ENCODE measurements at regions of chr2 and their contacts with region 1.

Region 1: DNA sequence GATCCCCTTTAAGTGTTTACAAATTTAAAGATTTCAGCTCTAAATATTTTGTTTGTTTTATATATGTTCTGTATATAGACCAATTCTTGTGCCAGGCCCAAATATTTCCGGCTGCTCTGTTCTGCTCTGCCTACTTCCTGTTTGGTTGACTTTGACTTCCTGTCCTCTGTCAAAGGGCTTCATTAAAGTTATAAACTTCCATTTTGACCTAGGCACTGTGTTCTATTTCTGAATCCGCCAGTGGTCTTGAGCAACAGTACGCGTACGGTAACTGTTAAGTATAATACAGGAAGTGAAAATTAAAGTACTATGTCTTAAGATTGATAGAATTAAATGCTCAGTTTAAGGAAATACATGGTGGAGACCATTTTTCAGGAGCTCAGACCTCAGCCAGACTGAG is 13.5 kb upstream of the REL start:
- DNase-seq: peak in 7 of 10 donors; percentile 17 to 63 (median 36)
- ATAC-seq: peak; percentile 93 to 98
- H3K4me3 Mint-ChIP-seq: peak overlapping the region in 9 of 10 donors; percentile 49 to 79 (median 64)
- H3K27ac Mint-ChIP-seq: peak overlapping the region; percentile 72 to 97 (median 88)
- H3K4me1 Mint-ChIP-seq: peaks cover 11 to 41% (median 18%) of the 10 kb centered on the region in 4 donors
- H3K27me3 Mint-ChIP-seq: no peaks in the 10 kb centered on the region

Region 2: GRCh38 chr2:60818272-60818671 is 49.6 kb before region 1 on chr2:
- POLR2A ChIA-PET with region 1: interaction called, 15 read pairs
- DNase-seq: peak in 3 of 10 donors; percentile 15 to 64 (median 16)
- ATAC-seq: no peak
- H3K4me3 Mint-ChIP-seq: peak overlapping the region in 2 of 10 donors; percentile 14 to 70
- H3K27ac Mint-ChIP-seq: peak overlapping the region in 7 of 10 donors; percentile 6 to 97 (median 90)
- H3K4me1 Mint-ChIP-seq: peaks cover 18 to 45% (median 40%) of the 10 kb centered on the region in 4 donors
- H3K27me3 Mint-ChIP-seq: peaks cover 0 to 12% (median 3%) of the 10 kb centered on the region in 5 donors

Region 3: DNA sequence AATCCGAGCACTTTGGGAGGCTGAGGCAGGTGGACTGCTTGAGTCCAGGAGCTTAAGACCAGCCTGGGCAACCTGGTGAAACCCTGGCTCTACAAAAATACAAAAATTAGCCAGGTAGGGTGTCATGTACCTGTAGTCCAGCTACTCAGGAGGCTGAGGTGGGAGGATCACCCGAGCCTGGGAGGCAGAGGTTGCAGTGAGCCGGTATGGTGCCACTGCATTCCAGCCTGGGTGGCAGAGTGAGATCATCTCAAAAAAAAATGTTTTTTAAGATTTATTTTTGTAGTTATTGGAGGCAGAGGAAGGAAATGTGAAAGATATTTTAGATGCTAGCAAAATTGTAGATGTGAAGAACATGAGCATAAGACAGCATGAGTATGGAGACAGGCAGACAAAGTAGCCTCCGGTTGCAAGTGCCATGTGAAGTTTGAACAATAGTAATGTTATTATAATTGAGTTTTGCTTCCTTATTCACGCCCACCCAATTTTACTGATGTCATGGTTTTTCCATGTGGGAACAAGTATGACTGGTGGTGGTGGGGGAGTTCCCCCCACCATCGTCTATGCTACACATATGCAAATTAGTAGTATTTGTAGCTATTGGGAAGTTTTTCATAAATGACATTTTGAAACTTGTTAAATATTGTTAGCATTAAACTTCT is 31.5 kb after region 1 on chr2:
- POLR2A ChIA-PET with region 1: no interaction called
- DNase-seq: no peak
- ATAC-seq: peak in 1 of 2 donors; percentile 12
- H3K4me3 Mint-ChIP-seq: peak overlapping the region in 1 of 10 donors; percentile 44
- H3K27ac Mint-ChIP-seq: peak overlapping the region in 7 of 10 donors; percentile 57 to 79 (median 70)
- H3K4me1 Mint-ChIP-seq: peaks cover 5 to 18% (median 7%) of the 10 kb centered on the region in 4 donors
- H3K27me3 Mint-ChIP-seq: no peaks in the 10 kb centered on the region

Measured in naive thymus-derived CD8-positive, alpha-beta T cell (primary cell).